ENCODE measurements at regions of chr1 and their contacts with region 1.

Region 1: GRCh38 chr1:42721926-42722325 is 18.1 kb downstream of the CLDN19 start:
- DNase-seq: no peak
- ATAC-seq: no peak
- H3K4me3 ChIP-seq: no peak overlapping the region
- H3K27ac ChIP-seq: no peak overlapping the region
- H3K4me1 ChIP-seq: no peaks in the 10 kb centered on the region
- H3K27me3 ChIP-seq: no peaks in the 10 kb centered on the region
- CTCF ChIP-seq: no peak
- POLR2A ChIP-seq: no peak
- RAD21 ChIP-seq: no peak

Region 2: DNA sequence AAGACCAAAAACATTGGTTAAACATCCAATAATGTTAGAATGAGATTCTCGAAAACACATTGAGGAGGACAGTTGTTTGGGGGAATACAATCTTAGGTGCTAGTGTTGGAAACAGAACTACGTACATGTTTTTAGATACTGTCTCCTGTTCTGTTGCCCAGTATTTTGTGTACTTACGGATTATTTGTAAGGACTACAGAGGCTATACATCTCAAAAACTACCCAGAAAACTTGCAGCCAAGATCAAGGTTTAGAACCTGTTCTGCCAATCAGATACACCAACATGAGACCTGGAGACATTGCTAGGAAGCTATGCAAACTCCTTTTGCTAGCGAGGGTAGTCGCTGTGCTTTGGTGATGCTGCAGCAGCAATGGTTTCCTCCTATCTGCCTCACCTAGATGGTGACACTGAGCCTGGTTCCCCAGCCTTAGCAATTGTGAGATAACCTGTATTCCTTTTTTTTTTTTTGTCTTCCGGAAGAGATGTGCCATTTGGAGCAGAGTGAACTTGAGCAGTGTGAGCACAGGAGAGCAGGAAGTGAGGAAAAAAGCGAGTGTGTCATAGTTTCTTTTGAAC is 17.9 kb before region 1 on chr1:
- CTCF ChIA-PET with region 1: interaction called, 3 read pairs
- POLR2A ChIA-PET with region 1: interaction called, 12 read pairs
- dilution Hi-C with region 1: no loop called
- in situ Hi-C with region 1: no loop called
- intact Hi-C with region 1: no loop called
- DNase-seq: no peak
- ATAC-seq: no peak
- H3K4me3 ChIP-seq: no peak overlapping the region
- H3K27ac ChIP-seq: no peak overlapping the region
- H3K4me1 ChIP-seq: no peaks in the 10 kb centered on the region
- H3K27me3 ChIP-seq: no peaks in the 10 kb centered on the region
- CTCF ChIP-seq: no peak
- POLR2A ChIP-seq: no peak
- RAD21 ChIP-seq: no peak